ENCODE measurements at regions of chr13 and their contacts with region 1.

Region 1: GRCh38 chr13:110412132-110412914 is 105.2 kb downstream of the COL4A2 start:
- DNase-seq: peak; percentile 82
- H3K4me3 Mint-ChIP-seq: no peak overlapping the region
- H3K27ac Mint-ChIP-seq: no peak overlapping the region
- H3K4me1 Mint-ChIP-seq: peaks cover 3% of the 10 kb centered on the region
- H3K27me3 Mint-ChIP-seq: peaks cover 70% of the 10 kb centered on the region

Region 2: GRCh38 chr13:108961542-108962125 is 1450.7 kb before region 1 on chr13:
- CTCF ChIA-PET with region 1: interaction called, 10 read pairs
- POLR2A ChIA-PET with region 1: no interaction called
- intact Hi-C with region 1: no loop called
- DNase-seq: no peak
- H3K4me3 Mint-ChIP-seq: no peak overlapping the region
- H3K27ac Mint-ChIP-seq: no peak overlapping the region
- H3K4me1 Mint-ChIP-seq: peaks cover 2% of the 10 kb centered on the region
- H3K27me3 Mint-ChIP-seq: no peaks in the 10 kb centered on the region

Region 3: DNA sequence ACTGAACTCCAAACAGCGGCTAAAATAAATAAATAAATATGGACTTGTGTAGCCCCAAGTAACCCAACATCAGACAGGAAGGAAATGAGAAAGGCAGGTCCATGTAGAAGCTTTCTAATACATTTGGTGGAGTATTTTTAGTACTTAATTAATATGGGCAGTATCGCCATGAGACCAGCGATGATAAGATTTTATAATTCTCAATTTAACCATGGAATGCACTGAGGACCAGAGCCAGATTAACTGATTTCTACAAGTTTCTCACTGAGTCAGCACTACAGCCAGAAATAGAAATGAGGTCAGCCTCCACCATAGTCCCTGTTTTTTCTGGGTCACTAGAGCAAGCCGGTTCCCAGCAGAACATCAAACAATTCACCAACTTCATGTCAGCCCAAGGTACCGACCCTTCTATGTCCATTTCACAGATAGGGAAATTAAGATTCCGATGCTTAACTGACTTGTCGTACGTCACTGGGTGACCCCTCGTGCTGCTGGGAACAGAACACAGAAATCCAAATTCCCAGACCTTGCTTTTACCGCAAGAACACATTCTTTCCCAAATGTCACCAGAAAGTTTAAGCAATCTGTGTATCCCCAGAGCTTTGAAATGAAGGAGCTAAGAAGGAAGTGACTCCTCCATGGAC is 195.8 kb before region 1 on chr13:
- CTCF ChIA-PET with region 1: interaction called, 54 read pairs
- POLR2A ChIA-PET with region 1: no interaction called
- intact Hi-C with region 1: no loop called
- DNase-seq: no peak
- H3K4me3 Mint-ChIP-seq: no peak overlapping the region
- H3K27ac Mint-ChIP-seq: no peak overlapping the region
- H3K4me1 Mint-ChIP-seq: no peaks in the 10 kb centered on the region
- H3K27me3 Mint-ChIP-seq: peaks cover 11% of the 10 kb centered on the region

Region 4: GRCh38 chr13:110225609-110226562 is 186.4 kb before region 1 on chr13:
- CTCF ChIA-PET with region 1: interaction called, 54 read pairs
- POLR2A ChIA-PET with region 1: no interaction called
- intact Hi-C with region 1: loop called (anchors 1 kb)
- DNase-seq: no peak
- H3K4me3 Mint-ChIP-seq: no peak overlapping the region
- H3K27ac Mint-ChIP-seq: no peak overlapping the region
- H3K4me1 Mint-ChIP-seq: no peaks in the 10 kb centered on the region
- H3K27me3 Mint-ChIP-seq: peaks cover 17% of the 10 kb centered on the region

Region 5: DNA sequence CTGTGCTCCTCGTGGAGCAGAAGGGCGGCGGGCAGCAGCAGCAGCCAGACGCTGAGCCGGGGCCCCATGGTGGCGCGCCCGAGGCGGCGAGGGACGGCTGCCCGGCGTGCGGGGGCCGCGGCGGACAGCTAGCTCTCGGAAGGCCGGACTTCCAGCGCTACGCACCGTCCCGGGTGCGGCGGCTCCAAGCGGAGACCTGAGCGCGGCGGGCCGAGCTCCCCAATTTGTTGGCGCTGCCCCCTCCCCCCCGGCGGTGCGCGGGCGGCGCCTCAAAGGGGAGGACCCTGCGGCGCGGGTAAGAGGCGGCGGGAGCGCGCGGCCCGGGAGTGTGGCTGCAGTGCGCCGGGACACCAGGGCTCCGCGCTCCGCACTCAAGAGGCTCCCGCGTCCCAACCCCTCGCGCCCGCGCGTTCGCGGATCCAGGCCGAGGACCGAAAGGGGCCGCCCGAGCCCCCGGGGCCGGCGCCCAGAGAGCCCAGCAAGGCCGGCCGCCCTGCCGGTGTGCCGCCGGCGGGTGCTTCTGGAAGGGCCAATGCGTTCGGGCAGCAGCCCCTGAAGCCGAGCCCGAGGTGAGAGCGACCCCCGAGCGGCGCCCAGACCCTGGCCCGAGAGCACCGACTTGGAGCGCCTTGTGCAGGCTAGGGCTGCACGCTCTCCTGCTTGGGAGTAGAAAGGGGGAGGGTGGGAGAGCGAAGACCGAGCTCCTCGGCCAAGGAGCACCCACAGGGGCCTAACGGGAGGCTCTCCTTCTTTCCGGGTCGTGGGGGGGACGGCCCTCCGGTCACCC is 105.2 kb before region 1 on chr13 and contains the starts of genes COL4A1 and COL4A2:
- CTCF ChIA-PET with region 1: no interaction called
- POLR2A ChIA-PET with region 1: no interaction called
- intact Hi-C with region 1: loop called (anchors 10 kb)
- DNase-seq: no peak
- H3K4me3 Mint-ChIP-seq: no peak within 1 kb of the TSS
- H3K27ac Mint-ChIP-seq: no peak within 1 kb of the TSS
- H3K4me1 Mint-ChIP-seq: peaks cover 11% of the 10 kb centered on the region
- H3K27me3 Mint-ChIP-seq: peaks cover 53% of the 10 kb centered on the region
- total RNA-seq, gene COL4A1: not detected
- total RNA-seq, gene COL4A2: not detected

Region 6: GRCh38 chr13:110387391-110388107 is 24.8 kb before region 1 on chr13:
- CTCF ChIA-PET with region 1: no interaction called
- POLR2A ChIA-PET with region 1: no interaction called
- intact Hi-C with region 1: no loop called
- DNase-seq: peak; percentile 44
- H3K4me3 Mint-ChIP-seq: no peak overlapping the region
- H3K27ac Mint-ChIP-seq: no peak overlapping the region
- H3K4me1 Mint-ChIP-seq: peaks cover 10% of the 10 kb centered on the region
- H3K27me3 Mint-ChIP-seq: peaks cover 36% of the 10 kb centered on the region

Region 7: GRCh38 chr13:110436276-110436675 is 24.0 kb after region 1 on chr13:
- CTCF ChIA-PET with region 1: no interaction called
- POLR2A ChIA-PET with region 1: no interaction called
- intact Hi-C with region 1: no loop called
- DNase-seq: no peak
- H3K4me3 Mint-ChIP-seq: no peak overlapping the region
- H3K27ac Mint-ChIP-seq: no peak overlapping the region
- H3K4me1 Mint-ChIP-seq: no peaks in the 10 kb centered on the region
- H3K27me3 Mint-ChIP-seq: peaks cover 31% of the 10 kb centered on the region

Measured in activated CD4-positive, alpha-beta memory T cell treated with anti-CD3 and anti-CD28 coated beads for 36 hours (primary cell).